HCT116 (cell line): ENCODE measurements at regions of chr9 and their contacts with region 1.

Region 1: GRCh38 chr9:78035383-78035993 is 3.9 kb upstream of the GNAQ start:
- DNase-seq: peak; percentile 65
- ATAC-seq: no peak
- H3K4me3 ChIP-seq: 0 out of 4 replicates have a peak overlapping the region, but pooled peaks of 1 of the 2 experiments have one; percentile 4
- H3K27ac ChIP-seq: no peak overlapping the region
- H3K4me1 ChIP-seq: peaks cover 8 to 16% of the 10 kb centered on the region in 2 experiments; a peak in 3 of 4 replicates
- H3K27me3 ChIP-seq: no peaks in the 10 kb centered on the region
- CTCF ChIP-seq: peak; percentile 73 to 79 (median 78)
- POLR2A ChIP-seq: no peak
- RAD21 ChIP-seq: peak; percentile 87

Region 2: DNA sequence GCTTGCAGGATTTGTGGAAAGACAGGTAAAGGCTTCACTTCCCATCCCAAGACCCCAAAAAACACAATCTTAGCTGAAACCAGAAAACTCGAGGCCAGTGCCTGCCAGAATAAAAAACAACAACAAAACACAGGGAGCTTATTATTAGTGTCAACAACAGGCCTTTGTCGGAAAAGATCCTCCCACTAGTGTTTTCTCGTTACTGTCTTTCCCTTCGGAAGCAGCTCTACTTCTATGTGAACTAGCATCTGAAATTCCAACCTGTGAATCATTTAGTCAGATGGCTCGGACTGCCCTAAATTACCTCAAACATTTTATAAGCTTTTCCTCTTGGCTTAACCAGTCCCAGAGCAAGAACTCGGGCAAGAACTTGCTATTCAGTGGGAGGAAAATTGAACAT is 265.1 kb before region 1 on chr9:
- CTCF ChIA-PET with region 1: no interaction called
- POLR2A ChIA-PET with region 1: no interaction called
- RAD21 ChIA-PET with region 1: no interaction called
- intact Hi-C with region 1: loop called (anchors 10 kb)
- DNase-seq: no peak
- ATAC-seq: no peak
- H3K4me3 ChIP-seq: no peak overlapping the region
- H3K27ac ChIP-seq: no peak overlapping the region
- H3K4me1 ChIP-seq: no peaks in the 10 kb centered on the region
- H3K27me3 ChIP-seq: no peaks in the 10 kb centered on the region
- CTCF ChIP-seq: no peak
- POLR2A ChIP-seq: no peak
- RAD21 ChIP-seq: no peak

Region 3: GRCh38 chr9:77841739-77842386 is 193.6 kb before region 1 on chr9:
- CTCF ChIA-PET with region 1: no interaction called
- POLR2A ChIA-PET with region 1: no interaction called
- RAD21 ChIA-PET with region 1: no interaction called
- intact Hi-C with region 1: loop called (anchors 10 kb)
- DNase-seq: no peak
- ATAC-seq: peak; percentile 44; the same call in 1 of the 2 replicates
- H3K4me3 ChIP-seq: no peak overlapping the region
- H3K27ac ChIP-seq: no peak overlapping the region
- H3K4me1 ChIP-seq: peaks cover 14 to 17% of the 10 kb centered on the region in 2 experiments
- H3K27me3 ChIP-seq: no peaks in the 10 kb centered on the region
- CTCF ChIP-seq: peak in 2 of 3 experiments; percentile 33 to 44; a peak in 4 of 6 replicates
- POLR2A ChIP-seq: no peak
- RAD21 ChIP-seq: peak; percentile 43

Region 4: DNA sequence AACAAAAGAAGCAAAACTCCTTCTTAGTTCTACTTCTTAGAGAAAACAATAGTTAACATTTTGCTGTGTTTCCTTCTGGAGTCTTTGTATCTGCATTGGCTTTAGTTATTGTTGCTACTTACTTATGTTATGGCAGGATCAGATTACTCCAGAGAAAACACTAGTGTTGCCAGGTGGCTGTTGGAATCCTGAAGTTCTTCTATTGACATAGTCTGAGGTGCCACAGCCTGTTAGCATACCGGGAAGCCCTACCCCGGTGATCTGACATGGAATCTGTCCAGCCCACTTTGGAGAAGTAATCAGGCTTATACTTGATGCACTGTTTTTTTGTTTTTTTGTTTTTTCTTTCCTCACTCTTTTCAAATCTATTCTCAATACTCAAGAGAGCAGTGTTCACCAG is 131.9 kb after region 1 on chr9:
- CTCF ChIA-PET with region 1: no interaction called
- POLR2A ChIA-PET with region 1: no interaction called
- RAD21 ChIA-PET with region 1: no interaction called
- intact Hi-C with region 1: no loop called
- DNase-seq: no peak
- ATAC-seq: no peak
- H3K4me3 ChIP-seq: no peak overlapping the region
- H3K27ac ChIP-seq: no peak overlapping the region
- H3K4me1 ChIP-seq: no peaks in the 10 kb centered on the region
- H3K27me3 ChIP-seq: no peaks in the 10 kb centered on the region
- CTCF ChIP-seq: no peak
- POLR2A ChIP-seq: no peak
- RAD21 ChIP-seq: no peak